ENCODE measurements at regions of chr10 and their contacts with region 1.

Region 1: DNA sequence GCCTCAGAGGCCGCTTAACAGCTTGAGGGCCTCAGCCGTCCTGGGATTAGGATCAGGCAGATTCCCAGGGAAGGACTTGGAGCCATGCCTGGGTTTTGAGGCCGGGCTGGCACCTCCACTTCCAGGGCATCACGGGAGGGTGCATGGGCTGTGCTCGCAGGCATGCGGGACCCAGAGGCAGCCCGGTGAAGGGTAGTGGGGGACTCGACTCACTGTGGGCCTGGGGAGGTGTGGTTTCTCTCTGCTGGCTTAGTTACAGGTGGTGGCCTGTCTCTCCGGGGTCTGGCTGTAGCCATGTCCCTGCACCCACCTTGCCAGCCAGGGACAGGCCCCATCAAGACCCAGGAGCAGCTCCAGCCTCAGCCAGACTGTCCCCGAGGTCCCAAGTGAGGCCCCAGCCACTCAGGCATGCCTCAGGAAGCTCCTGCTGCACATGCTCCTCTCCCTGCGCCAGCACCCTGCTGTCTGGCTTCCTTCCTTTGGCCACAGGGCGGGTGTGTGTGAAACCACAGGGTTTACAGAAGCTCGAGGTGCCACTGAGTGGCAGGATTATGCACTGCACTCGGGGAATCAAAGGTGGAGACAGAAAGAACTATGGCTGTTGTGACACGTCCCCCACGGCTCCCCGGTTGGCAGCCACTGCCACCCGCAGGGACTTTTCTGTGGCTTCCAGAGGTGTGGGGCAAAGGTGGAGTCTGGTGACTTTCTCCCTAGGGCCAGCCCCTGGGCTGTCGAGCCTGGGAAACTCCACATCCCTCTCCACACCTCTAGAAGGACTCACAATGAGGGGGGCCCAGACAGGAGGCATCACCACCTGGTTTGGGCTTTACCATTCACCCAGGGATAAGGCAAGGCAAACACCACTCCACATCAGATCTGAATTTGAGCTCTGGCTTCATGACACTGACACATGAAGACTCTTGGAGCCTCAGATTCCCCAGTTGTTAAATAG is 19.7 kb downstream of the GOLGA7B start:
- DNase-seq: peak; percentile 95
- H3K4me3 Mint-ChIP-seq: peak overlapping the region; percentile 27
- H3K27ac Mint-ChIP-seq: no peak overlapping the region
- H3K4me1 Mint-ChIP-seq: peaks cover 11% of the 10 kb centered on the region
- H3K27me3 Mint-ChIP-seq: no peaks in the 10 kb centered on the region

Region 2: DNA sequence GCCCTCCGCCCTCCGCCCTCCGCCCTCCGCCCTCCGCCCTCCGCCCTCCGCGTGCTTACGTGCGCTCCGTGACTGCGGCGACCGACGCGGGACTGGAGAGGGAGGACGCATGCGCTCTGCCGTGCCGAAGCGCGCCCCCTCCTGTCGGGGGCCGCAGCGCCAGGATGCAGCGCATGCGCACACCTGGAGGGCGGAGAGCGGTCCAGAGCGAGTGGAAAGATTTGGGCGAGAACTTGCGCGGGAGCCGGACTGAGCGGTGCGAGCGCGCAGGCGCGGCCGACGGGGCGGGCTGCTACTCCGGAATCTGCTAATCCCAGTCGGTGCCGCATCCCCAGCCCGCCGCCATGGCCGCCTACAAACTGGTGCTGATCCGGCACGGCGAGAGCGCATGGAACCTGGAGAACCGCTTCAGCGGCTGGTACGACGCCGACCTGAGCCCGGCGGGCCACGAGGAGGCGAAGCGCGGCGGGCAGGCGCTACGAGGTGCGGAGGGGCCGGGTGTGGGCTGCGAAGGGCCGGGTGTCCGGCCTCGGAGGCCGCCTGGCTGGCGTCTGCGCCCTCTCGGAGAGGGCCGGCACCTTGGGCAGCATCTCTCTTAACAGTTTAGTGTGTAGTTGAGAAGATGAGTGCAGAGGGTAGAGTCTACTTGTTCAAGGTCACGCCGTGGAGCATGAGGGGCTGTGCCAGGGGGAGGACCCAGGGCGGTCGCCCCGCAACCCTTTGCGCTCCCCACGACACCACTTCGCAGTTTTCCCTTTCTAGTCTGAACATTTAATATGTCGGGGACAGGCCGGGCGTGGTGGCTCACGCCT is 443.2 kb before region 1 on chr10 and contains the start of gene PGAM1:
- CTCF ChIA-PET with region 1: no interaction called
- intact Hi-C with region 1: no loop called
- DNase-seq: peak; percentile 95
- H3K4me3 Mint-ChIP-seq: peak within 1 kb of the TSS; percentile 90
- H3K27ac Mint-ChIP-seq: peak within 1 kb of the TSS; percentile 98
- H3K4me1 Mint-ChIP-seq: peaks cover 50% of the 10 kb centered on the region
- H3K27me3 Mint-ChIP-seq: no peaks in the 10 kb centered on the region
- total RNA-seq, gene PGAM1: 1,371 to 1,393 TPM

Region 3: DNA sequence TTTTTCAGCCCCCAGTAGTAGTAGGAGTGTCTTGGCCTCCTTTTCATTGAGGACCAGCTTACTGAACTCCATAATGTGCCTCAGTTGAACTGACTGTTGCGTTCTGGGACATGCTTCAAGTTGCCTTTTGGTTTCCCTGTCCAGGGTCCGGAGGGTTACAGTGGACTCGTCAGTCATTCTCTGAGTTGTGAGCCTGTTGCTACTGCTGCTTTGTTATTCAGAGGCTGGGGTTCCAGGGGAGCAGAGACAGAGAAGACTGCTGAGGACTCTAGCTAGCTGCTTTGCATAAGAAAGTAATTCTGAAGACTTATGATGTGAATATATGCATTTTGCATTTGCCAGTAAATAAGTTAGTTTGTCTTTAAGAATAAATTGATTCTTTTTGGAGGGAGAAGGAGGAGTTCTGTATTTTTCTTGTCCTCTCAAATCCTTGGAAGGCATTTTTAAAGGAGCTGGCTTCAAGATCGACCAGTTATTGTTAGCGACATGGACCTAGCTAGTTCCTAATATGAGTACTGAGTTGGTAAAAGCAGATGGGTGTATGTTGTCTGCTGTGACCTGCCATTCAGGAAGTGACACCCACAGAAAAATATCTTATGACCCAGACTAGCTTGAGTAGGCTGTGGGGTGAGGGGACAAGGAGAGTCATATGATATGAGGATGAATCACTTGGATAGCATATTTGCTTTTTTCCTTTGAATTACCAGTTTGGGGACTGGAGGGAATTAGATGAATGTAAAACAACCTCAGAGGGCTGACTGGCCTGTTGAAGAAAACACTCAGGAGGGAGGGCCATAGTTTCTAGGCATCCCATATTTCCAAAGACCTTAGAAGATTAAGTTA is 220.6 kb before region 1 on chr10:
- CTCF ChIA-PET with region 1: no interaction called
- intact Hi-C with region 1: no loop called
- DNase-seq: peak; percentile 58
- H3K4me3 Mint-ChIP-seq: no peak overlapping the region
- H3K27ac Mint-ChIP-seq: no peak overlapping the region
- H3K4me1 Mint-ChIP-seq: peaks cover 11% of the 10 kb centered on the region
- H3K27me3 Mint-ChIP-seq: no peaks in the 10 kb centered on the region

Region 4: DNA sequence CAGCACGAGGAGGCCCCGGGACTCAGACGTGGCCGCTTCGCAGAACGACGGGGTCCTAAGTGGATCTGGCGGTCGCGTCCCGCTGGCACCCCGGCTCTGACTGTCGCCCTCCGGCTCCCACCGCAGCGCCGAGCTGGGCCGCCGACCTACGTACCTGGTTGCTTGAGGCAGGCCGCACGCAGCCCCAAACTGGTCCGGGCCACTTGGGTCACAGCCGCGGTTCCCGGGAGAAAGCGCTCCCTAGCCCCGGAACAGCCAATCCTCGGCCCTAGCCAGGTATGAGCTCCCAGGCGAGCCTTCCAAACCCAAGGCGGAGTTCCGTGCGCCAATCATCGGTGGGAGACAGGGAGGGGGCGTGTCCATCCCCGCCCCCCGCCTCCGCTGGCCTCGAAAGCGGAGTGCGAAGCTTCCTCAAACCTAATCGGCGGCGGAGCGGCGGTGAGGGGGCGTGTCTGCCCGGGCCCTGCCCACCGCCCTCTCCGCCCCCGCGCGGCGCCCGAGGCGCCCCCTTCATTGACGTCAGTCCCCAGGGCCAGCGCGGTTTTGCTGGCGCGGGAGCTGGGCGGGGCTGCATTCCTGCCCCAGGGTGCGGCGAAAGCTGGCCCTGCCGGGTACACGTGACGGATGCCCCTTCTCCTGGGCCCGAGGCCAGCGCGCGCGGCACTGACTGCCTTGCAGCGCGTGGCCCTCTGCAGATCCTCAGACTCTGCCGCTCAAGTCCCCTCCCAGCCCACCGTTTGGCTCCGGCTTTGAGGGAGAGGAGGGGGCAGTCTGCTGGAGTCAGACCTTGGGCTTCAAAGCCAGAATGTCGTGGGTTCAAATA is 182.2 kb before region 1 on chr10 and contains the start of gene AVPI1:
- CTCF ChIA-PET with region 1: interaction called, 7 read pairs
- intact Hi-C with region 1: loop called (anchors 1 kb)
- DNase-seq: peak; percentile 96
- H3K4me3 Mint-ChIP-seq: peak within 1 kb of the TSS; percentile 81
- H3K27ac Mint-ChIP-seq: no peak within 1 kb of the TSS
- H3K4me1 Mint-ChIP-seq: peaks cover 12% of the 10 kb centered on the region
- H3K27me3 Mint-ChIP-seq: no peaks in the 10 kb centered on the region
- total RNA-seq, gene AVPI1: 1.5 to 1.9 TPM

Region 5: DNA sequence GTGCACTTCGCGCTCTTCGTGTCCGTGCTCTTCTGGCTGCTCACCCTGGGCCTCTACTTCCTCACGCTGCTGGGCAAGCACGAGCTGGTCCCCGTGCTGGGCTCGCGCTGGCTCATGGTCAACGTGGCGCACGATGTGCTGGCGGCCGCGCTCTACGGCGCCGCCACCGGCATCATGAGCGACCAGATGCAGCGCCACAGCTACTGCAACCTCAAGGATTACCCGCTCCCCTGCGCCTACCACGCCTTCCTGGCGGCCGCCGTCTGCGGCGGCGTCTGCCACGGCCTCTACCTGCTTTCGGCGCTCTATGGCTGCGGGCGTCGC is 155.4 kb before region 1 on chr10:
- CTCF ChIA-PET with region 1: interaction called, 6 read pairs
- intact Hi-C with region 1: loop called (anchors 2 kb)
- DNase-seq: peak; percentile 65
- H3K4me3 Mint-ChIP-seq: peak overlapping the region; percentile 94
- H3K27ac Mint-ChIP-seq: no peak overlapping the region
- H3K4me1 Mint-ChIP-seq: peaks cover 11% of the 10 kb centered on the region
- H3K27me3 Mint-ChIP-seq: peaks cover 17% of the 10 kb centered on the region

Region 6: GRCh38 chr10:97780841-97781617 is 88.3 kb before region 1 on chr10:
- CTCF ChIA-PET with region 1: interaction called, 14 read pairs
- intact Hi-C with region 1: no loop called
- DNase-seq: no peak
- H3K4me3 Mint-ChIP-seq: no peak overlapping the region
- H3K27ac Mint-ChIP-seq: no peak overlapping the region
- H3K4me1 Mint-ChIP-seq: peaks cover 26% of the 10 kb centered on the region
- H3K27me3 Mint-ChIP-seq: no peaks in the 10 kb centered on the region

Region 7: GRCh38 chr10:97801422-97801821 is 67.9 kb before region 1 on chr10:
- CTCF ChIA-PET with region 1: interaction called, 232 read pairs
- intact Hi-C with region 1: loop called (anchors 1 kb)
- DNase-seq: no peak
- H3K4me3 Mint-ChIP-seq: no peak overlapping the region
- H3K27ac Mint-ChIP-seq: no peak overlapping the region
- H3K4me1 Mint-ChIP-seq: peaks cover 8% of the 10 kb centered on the region
- H3K27me3 Mint-ChIP-seq: no peaks in the 10 kb centered on the region

Measured in activated naive CD4-positive, alpha-beta T cell treated with anti-CD3 and anti-CD28 coated beads for 36 hours (primary cell).